ENCODE measurements at regions of chr14 and their contacts with region 1.

Region 1: DNA sequence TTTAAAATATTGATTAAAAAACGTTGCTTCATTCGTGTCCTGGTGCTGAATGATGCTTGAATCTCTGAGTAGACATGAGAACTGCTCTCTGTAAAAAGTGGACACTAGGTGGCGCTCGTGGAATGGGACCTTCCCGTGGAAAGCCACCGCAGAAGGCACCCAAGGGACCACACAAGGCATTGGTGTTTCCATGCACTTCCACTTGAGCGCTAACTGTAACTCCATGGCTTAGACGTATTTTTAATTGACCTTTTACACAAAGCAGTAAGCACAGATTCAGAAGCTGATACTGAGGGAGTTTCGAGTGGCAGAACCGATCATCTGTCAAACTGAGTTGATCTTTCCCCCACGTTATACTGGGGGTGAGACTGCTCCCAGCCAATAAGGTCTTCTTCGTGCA is 135.3 kb downstream of the PRKCH start:
- DNase-seq: peak; percentile 69
- H3K4me3 Mint-ChIP-seq: no peak overlapping the region
- H3K27ac Mint-ChIP-seq: peak overlapping the region; percentile 71
- H3K4me1 Mint-ChIP-seq: peaks cover 71% of the 10 kb centered on the region
- H3K27me3 Mint-ChIP-seq: no peaks in the 10 kb centered on the region

Region 2: DNA sequence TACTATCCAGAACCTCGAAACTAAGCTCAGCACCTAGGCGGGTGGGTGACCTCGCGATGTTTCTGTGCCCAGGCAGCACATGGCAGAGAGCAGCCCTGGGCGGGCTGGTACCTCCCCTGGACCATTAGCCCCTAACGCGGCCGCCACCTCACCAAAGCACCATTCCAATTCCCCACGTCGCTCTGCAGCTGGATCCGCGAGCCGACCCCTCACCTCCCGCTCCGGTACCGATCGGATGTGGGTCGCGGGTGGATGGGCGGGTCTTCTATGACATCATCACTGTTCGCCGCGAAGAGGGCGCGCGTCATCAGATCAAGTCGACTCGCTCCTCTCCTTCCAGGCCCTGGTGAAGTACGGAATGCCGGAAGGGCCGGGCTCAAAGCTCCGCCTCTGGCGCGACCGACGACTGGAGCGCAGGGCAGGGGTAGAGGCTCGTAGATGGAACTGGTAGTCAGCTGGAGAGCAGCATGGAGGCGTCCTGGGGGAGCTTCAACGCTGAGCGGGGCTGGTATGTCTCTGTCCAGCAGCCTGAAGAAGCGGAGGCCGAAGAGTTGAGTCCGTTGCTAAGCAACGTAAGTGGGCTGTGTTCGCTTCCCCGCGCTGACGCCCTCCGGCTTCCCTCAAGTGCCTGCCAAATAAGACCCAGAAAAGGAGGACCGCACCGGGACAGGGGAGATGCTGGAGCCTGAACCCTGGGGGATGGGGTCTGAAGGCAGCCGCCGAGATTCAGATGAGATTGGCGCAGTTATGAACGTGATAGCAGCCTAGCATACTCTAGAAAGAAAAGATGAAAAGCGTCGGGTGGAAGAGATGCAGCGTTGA is 475.7 kb before region 1 on chr14 and contains the starts of genes SLC38A6 and TRMT5:
- intact Hi-C with region 1: loop called (anchors 10 kb)
- DNase-seq: peak; percentile 88
- H3K4me3 Mint-ChIP-seq: no peak within 1 kb of the TSS
- H3K27ac Mint-ChIP-seq: no peak within 1 kb of the TSS
- H3K4me1 Mint-ChIP-seq: peaks cover 17% of the 10 kb centered on the region
- H3K27me3 Mint-ChIP-seq: no peaks in the 10 kb centered on the region
- total RNA-seq, gene SLC38A6: 4.5 and 4.7 TPM in 2 replicates
- total RNA-seq, gene TRMT5: 17.4 and 19.2 TPM in 2 replicates

Region 3: GRCh38 chr14:61321385-61322010 is 135.2 kb before region 1 on chr14 and contains the start of gene PRKCH:
- intact Hi-C with region 1: loop called (anchors 1 kb)
- DNase-seq: peak; percentile 82
- H3K4me3 Mint-ChIP-seq: peak within 1 kb of the TSS; percentile 93
- H3K27ac Mint-ChIP-seq: peak within 1 kb of the TSS; percentile 95
- H3K4me1 Mint-ChIP-seq: peaks cover 32% of the 10 kb centered on the region
- H3K27me3 Mint-ChIP-seq: no peaks in the 10 kb centered on the region
- total RNA-seq, gene PRKCH: 145 and 151 TPM in 2 replicates

Region 4: DNA sequence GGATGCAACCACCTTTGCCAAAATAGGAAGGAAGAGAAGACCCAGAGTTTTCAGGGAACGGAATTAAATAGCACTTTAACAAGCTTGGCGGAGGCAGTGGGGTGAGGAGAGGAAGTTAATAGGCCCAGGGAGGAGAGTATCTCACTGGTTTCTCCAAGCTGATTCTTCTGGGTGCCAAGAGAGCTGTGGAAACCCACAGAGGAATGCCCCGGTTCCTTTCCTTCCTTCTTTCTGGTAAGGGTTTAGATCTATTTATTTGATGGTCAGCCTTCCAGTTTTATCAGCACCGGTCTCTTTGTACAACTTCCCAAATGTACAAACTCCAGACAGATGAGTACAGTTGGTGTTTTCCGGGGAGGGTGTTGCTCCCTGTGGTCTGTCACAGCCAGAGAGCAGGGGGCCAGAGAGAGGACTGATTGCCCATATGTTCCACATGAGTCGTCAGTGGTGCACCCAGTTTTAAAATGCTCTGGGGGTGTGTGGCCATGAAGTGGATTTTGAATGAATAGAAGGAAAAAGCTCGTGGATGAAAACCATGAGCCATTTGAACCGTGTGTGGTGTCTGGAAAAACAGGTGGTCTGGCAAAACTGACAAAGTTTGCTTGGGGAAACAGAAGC is 108.8 kb before region 1 on chr14:
- intact Hi-C with region 1: loop called (anchors 1 kb)
- DNase-seq: no peak
- H3K4me3 Mint-ChIP-seq: peak overlapping the region; percentile 70
- H3K27ac Mint-ChIP-seq: peak overlapping the region; percentile 95
- H3K4me1 Mint-ChIP-seq: peaks cover 96% of the 10 kb centered on the region
- H3K27me3 Mint-ChIP-seq: no peaks in the 10 kb centered on the region

Region 5: GRCh38 chr14:61403411-61403810 is 53.3 kb before region 1 on chr14:
- intact Hi-C with region 1: loop called (anchors 1 kb)
- DNase-seq: peak; percentile 45
- H3K4me3 Mint-ChIP-seq: peak overlapping the region; percentile 31
- H3K27ac Mint-ChIP-seq: peak overlapping the region; percentile 87
- H3K4me1 Mint-ChIP-seq: peaks cover 79% of the 10 kb centered on the region
- H3K27me3 Mint-ChIP-seq: no peaks in the 10 kb centered on the region

Region 6: GRCh38 chr14:61438860-61439684 is 17.6 kb before region 1 on chr14:
- intact Hi-C with region 1: loop called (anchors 1 kb)
- DNase-seq: no peak
- H3K4me3 Mint-ChIP-seq: peak overlapping the region; percentile 78
- H3K27ac Mint-ChIP-seq: peak overlapping the region; percentile 83
- H3K4me1 Mint-ChIP-seq: peaks cover 80% of the 10 kb centered on the region
- H3K27me3 Mint-ChIP-seq: no peaks in the 10 kb centered on the region

Region 7: GRCh38 chr14:61628016-61628725 is 171.5 kb after region 1 on chr14:
- intact Hi-C with region 1: no loop called
- DNase-seq: no peak
- H3K4me3 Mint-ChIP-seq: no peak overlapping the region
- H3K27ac Mint-ChIP-seq: no peak overlapping the region
- H3K4me1 Mint-ChIP-seq: peaks cover 21% of the 10 kb centered on the region
- H3K27me3 Mint-ChIP-seq: no peaks in the 10 kb centered on the region

Region 8: GRCh38 chr14:61837336-61838229 is 380.9 kb after region 1 on chr14:
- intact Hi-C with region 1: loop called (anchors 1 kb)
- DNase-seq: peak; percentile 66
- H3K4me3 Mint-ChIP-seq: no peak overlapping the region
- H3K27ac Mint-ChIP-seq: no peak overlapping the region
- H3K4me1 Mint-ChIP-seq: no peaks in the 10 kb centered on the region
- H3K27me3 Mint-ChIP-seq: peaks cover 9% of the 10 kb centered on the region

Measured in activated T-helper 1 cell treated with anti-CD3 and anti-CD28 coated beads, Interleukin-12 subunit alpha, Interleukin-12 subunit beta, Interleukin-2, Interleukin-4 antibody, amounts not matched to agents 30 ng/mL and 10 ng/mL and 1 ng/mL, durations not matched to agents 14 hours and 24 hours and 36 hours (primary cell).